T-cell (primary cell): ENCODE measurements at regions of chr2 and their contacts with region 1.

Region 1: GRCh38 chr2:83217862-83218261 is 1241.2 kb downstream of the SUCLG1 start:
- DNase-seq: no peak
- ATAC-seq: no peak
- H3K4me3 ChIP-seq: no peak overlapping the region
- H3K4me3 Mint-ChIP-seq: no peak overlapping the region
- H3K27ac ChIP-seq: no peak overlapping the region
- H3K27ac Mint-ChIP-seq: no peak overlapping the region
- H3K4me1 ChIP-seq: no peaks in the 10 kb centered on the region
- H3K4me1 Mint-ChIP-seq: no peaks in the 10 kb centered on the region
- H3K27me3 ChIP-seq: no peaks in the 10 kb centered on the region
- H3K27me3 Mint-ChIP-seq: no peaks in the 10 kb centered on the region

Region 2: DNA sequence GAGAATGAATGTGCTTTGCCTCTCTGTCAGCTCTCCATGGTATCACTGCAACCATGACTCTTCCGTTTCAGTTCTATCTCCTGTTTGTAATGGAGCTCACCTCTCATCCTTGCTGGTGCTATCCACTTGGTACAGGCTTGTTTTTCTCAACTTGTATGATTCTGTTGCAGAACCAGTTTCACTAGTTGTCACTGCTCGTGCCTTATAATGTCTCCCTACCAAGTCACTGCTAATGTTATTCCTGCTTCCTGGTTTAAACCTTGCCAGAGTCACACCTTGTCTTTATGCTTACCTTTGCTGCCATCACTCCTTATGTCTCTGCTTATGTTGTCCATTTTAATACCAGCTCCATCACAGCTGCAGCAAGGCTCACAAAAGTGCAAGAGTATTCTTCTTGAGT is 1722.3 kb before region 1 on chr2:
- CTCF ChIA-PET with region 1: no interaction called
- POLR2A ChIA-PET with region 1: interaction called in 1 of 2 experiments, 12 read pairs
- DNase-seq: no peak
- ATAC-seq: no peak
- H3K4me3 ChIP-seq: no peak overlapping the region
- H3K4me3 Mint-ChIP-seq: no peak overlapping the region
- H3K27ac ChIP-seq: no peak overlapping the region
- H3K27ac Mint-ChIP-seq: no peak overlapping the region
- H3K4me1 ChIP-seq: no peaks in the 10 kb centered on the region
- H3K4me1 Mint-ChIP-seq: no peaks in the 10 kb centered on the region
- H3K27me3 ChIP-seq: no peaks in the 10 kb centered on the region
- H3K27me3 Mint-ChIP-seq: no peaks in the 10 kb centered on the region

Region 3: DNA sequence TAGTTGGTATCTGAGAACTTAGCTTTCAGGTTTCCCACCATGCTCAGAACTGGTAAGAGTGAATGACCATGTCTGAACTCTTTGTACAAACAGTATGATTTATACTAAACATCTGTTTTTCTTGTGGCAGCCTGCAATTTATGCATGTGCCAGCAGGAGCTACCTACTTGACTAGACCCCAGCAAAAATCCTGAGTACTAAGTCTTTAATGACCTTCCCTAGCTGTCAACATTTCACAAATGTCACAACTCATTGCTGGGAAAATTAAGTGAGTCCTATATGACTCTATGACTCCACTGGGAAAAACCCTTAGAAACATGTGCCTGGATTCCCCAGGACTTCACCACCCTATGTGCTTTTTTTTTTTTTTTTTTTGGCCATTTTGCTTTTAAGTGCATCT is 15.4 kb after region 1 on chr2:
- CTCF ChIA-PET with region 1: no interaction called
- POLR2A ChIA-PET with region 1: no interaction called
- DNase-seq: no peak
- ATAC-seq: no peak
- H3K4me3 ChIP-seq: no peak overlapping the region
- H3K4me3 Mint-ChIP-seq: no peak overlapping the region
- H3K27ac ChIP-seq: no peak overlapping the region
- H3K27ac Mint-ChIP-seq: no peak overlapping the region
- H3K4me1 ChIP-seq: no peaks in the 10 kb centered on the region
- H3K4me1 Mint-ChIP-seq: no peaks in the 10 kb centered on the region
- H3K27me3 ChIP-seq: no peaks in the 10 kb centered on the region
- H3K27me3 Mint-ChIP-seq: no peaks in the 10 kb centered on the region

Region 4: GRCh38 chr2:83584672-83585071 is 366.8 kb after region 1 on chr2:
- CTCF ChIA-PET with region 1: no interaction called
- POLR2A ChIA-PET with region 1: no interaction called
- DNase-seq: no peak
- ATAC-seq: no peak
- H3K4me3 ChIP-seq: no peak overlapping the region
- H3K4me3 Mint-ChIP-seq: no peak overlapping the region
- H3K27ac ChIP-seq: no peak overlapping the region
- H3K27ac Mint-ChIP-seq: no peak overlapping the region
- H3K4me1 ChIP-seq: no peaks in the 10 kb centered on the region
- H3K4me1 Mint-ChIP-seq: no peaks in the 10 kb centered on the region
- H3K27me3 ChIP-seq: no peaks in the 10 kb centered on the region
- H3K27me3 Mint-ChIP-seq: no peaks in the 10 kb centered on the region

Region 5: GRCh38 chr2:83844490-83844889 is 626.6 kb after region 1 on chr2:
- CTCF ChIA-PET with region 1: no interaction called
- POLR2A ChIA-PET with region 1: no interaction called
- DNase-seq: no peak
- ATAC-seq: no peak
- H3K4me3 ChIP-seq: no peak overlapping the region
- H3K4me3 Mint-ChIP-seq: no peak overlapping the region
- H3K27ac ChIP-seq: no peak overlapping the region
- H3K27ac Mint-ChIP-seq: no peak overlapping the region
- H3K4me1 ChIP-seq: no peaks in the 10 kb centered on the region
- H3K4me1 Mint-ChIP-seq: no peaks in the 10 kb centered on the region
- H3K27me3 ChIP-seq: no peaks in the 10 kb centered on the region
- H3K27me3 Mint-ChIP-seq: no peaks in the 10 kb centered on the region